Lower leg skin (tissue), 4 donors: ENCODE measurements at regions of chr2 and their contacts with region 1.

Region 1: DNA sequence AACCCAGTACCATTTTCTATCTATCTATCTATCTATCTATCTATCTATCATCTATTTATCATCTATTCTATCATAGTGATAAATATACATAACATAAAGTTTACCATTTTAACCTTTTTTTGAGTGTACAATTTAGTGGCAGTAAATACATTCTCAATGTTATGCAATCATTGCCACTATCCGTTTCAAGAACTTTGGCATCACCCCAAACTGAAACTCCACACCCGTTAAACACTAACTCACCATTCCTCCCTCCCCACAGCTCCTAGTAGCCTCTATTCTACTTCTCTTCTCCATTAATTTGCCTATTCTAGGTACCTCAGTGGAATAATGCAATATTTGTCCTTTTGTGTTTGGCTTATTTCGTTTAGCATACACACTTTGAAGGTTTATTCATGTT is 82.5 kb upstream of the KCNE4 start:
- DNase-seq: no peak
- H3K4me3 ChIP-seq: no peak overlapping the region
- CTCF ChIP-seq: no peak
- POLR2A ChIP-seq: no peak

Region 2: DNA sequence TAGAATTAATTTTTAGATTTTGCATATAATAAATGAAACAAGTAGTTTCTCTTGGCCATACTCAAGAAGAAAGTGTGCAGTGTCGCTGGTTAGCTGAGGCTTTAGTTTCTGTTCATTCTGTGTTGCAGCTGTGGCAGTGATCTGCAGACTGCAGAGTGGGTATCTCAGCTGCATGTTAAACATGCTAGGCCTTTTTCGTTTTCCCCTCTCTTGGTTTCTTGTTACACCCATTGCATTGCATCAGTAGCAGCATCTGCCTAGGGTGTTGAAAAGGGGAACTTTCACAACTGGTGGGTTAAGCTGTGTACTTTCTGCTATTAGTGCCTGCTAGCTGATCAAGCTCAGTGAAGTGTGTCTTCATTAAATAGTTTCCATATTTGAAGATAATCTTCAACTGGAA is 57.4 kb before region 1 on chr2:
- intact Hi-C with region 1: loop called (anchors 2 kb)
- DNase-seq: no peak
- H3K4me3 ChIP-seq: no peak overlapping the region
- CTCF ChIP-seq: no peak
- POLR2A ChIP-seq: no peak

Region 3: DNA sequence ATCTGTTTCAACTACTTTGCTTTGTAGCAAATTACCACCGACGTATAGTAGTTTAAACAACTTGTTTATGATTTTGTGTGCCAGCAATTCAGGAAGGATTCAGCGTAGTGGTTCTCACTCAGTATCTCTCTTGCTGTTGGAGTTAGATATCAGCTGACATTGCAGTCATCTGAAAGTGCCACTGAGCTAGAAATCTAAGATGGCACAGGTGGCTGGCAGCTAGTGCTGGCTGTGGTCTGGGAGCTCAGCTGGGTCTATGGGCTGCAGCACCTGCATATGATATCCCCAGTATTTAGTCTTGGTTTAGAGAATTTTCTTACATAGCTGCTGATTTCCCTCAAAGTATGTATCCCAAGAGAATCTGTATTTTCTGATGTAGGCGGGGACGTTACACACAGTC is 397.1 kb after region 1 on chr2:
- intact Hi-C with region 1: no loop called
- DNase-seq: no peak
- H3K4me3 ChIP-seq: no peak overlapping the region
- CTCF ChIP-seq: no peak
- POLR2A ChIP-seq: no peak